AG04449 (cell line): ENCODE measurements at regions of chr4 and their contacts with region 1.

Region 1: DNA sequence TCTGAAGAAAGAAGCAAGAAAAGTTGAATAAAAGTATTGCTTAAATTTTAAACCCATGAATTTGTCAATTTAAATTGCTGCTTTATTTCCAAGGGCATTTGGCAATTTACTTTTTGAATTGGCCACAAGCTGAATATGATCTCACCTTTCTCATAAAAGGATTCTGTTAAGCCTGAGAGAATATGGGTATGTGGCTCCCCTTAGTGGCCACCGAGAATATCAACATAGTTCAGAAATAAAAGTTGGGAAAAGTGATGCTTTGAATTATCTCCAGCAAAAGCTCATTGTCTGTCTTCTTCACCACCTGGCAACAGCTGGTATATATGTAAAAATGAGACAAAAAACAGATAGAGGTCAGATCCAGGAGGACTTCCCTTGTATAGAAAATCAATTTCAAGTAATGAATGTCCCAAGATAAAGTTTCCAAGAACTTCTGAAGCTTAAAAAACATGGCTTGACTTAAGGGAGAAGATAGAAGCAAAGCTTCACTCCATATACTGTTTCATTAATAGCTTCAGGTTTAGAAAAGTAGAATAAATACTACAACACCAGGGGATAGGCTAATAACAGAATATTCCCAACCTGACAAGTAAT is 290.7 kb upstream of the FAM241A start:
- DNase-seq: no peak
- H3K4me3 ChIP-seq: no peak overlapping the region
- CTCF ChIP-seq: peak; percentile 53

Region 2: GRCh38 chr4:111649308-111649707 is 205.3 kb before region 1 on chr4:
- CTCF ChIA-PET with region 1: interaction called, 13 read pairs
- POLR2A ChIA-PET with region 1: no interaction called
- DNase-seq: no peak
- H3K4me3 ChIP-seq: no peak overlapping the region
- CTCF ChIP-seq: no peak

Region 3: GRCh38 chr4:111883557-111883999 is 29.0 kb after region 1 on chr4:
- CTCF ChIA-PET with region 1: interaction called, 12 read pairs
- POLR2A ChIA-PET with region 1: no interaction called
- DNase-seq: no peak
- H3K4me3 ChIP-seq: no peak overlapping the region
- CTCF ChIP-seq: no peak